Right ventricle myocardium superior (tissue), 1 donor: ENCODE measurements at regions of chr6 and their contacts with region 1.

Region 1: GRCh38 chr6:35688581-35689322 is at the start of gene FKBP5:
- DNase-seq: peak; percentile 98
- ATAC-seq: peak; percentile 91
- total RNA-seq, gene FKBP5: 106 TPM

Region 2: DNA sequence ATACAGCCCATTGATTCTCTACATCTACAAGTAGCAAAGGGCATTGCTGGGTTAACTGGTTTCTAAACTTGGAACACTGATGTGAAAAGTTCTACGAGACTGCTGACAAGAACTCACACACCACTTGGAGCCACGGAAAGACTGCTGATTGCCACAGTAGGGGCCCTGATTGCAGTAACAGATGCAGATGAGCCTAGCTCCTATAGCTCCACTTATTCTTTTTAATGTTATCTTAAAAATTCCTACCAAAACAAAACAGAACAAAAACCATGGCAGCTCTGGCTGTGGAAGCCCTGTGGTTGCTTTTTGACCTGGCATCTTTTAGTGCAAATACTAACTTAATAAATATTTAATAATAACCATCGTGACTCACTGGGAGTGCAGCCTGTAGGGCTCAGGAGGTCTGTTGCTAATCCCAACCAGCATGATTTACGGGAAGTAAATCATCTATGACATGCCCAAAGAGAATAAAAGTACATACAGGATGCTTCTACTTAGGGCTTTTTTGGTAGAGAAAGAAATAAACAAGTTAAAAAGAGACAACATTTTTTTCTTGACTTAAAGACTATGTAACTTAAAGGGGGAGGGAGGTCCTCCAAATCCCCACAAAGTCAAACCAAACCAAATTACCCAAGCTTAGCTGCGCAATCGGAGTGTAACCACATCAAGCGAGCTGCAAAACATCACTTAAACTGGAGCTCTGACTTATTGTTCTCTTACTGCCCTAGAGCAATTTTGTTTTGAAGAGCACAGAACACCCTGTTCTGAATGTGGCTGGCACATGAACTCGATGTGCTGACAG is 87.2 kb before region 1 on chr6:
- intact Hi-C with region 1: loop called (anchors 10 kb)
- DNase-seq: peak; percentile 64
- ATAC-seq: peak; percentile 88

Region 3: GRCh38 chr6:35742797-35743196 is 54.0 kb after region 1 on chr6:
- intact Hi-C with region 1: no loop called
- DNase-seq: no peak
- ATAC-seq: no peak

Region 4: GRCh38 chr6:35893246-35893645 is 204.5 kb after region 1 on chr6:
- intact Hi-C with region 1: no loop called
- DNase-seq: no peak
- ATAC-seq: no peak

Region 5: GRCh38 chr6:35973670-35974222 is 285.0 kb after region 1 on chr6:
- intact Hi-C with region 1: no loop called
- DNase-seq: no peak
- ATAC-seq: peak; percentile 48